B cell (primary cell): ENCODE measurements at regions of chr17 and their contacts with region 1.

Region 1: DNA sequence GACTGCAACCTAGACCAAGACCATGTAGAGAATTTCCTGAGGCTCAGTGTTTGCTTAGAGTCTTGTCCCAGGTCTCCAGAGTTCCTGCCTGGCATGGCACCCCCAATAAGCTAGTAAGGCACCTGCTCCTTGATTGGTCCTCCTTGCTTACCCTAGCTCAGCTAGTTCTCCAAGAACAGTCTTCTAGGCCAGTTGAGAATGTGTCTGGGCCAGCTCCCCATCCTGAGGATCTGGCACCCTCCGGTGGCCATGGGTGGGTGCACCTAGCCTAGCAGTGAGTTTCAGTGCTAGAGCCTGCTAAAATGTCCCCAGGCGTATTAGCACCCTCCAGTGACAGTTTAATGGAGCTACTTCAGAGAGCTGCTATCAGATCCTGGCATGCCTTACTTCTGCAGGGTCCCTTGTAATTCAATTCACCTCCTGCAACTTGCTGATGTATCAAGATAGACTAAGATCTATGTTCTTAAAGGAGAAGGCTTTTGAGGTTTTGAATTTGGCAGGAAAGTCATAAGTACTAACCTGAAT is 44.4 kb upstream of the MED13 start:
- DNase-seq: peak; percentile 76
- ATAC-seq: peak; percentile 97
- H3K4me3 ChIP-seq: no peak overlapping the region
- H3K4me3 Mint-ChIP-seq: no peak overlapping the region
- H3K27ac ChIP-seq: no peak overlapping the region
- H3K27ac Mint-ChIP-seq: no peak overlapping the region
- H3K4me1 ChIP-seq: no peaks in the 10 kb centered on the region
- H3K4me1 Mint-ChIP-seq: no peaks in the 10 kb centered on the region
- H3K27me3 ChIP-seq: peaks cover 0 to 4% (median 0%) of the 10 kb centered on the region in 4 experiments
- H3K27me3 Mint-ChIP-seq: peaks cover 10% of the 10 kb centered on the region
- CTCF ChIP-seq: peak; percentile 74

Region 2: GRCh38 chr17:61635913-61636432 is 473.5 kb before region 1 on chr17:
- CTCF ChIA-PET with region 1: interaction called, 7 read pairs
- POLR2A ChIA-PET with region 1: no interaction called
- intact Hi-C with region 1: loop called (anchors 5 kb)
- DNase-seq: peak; percentile 68
- ATAC-seq: no peak
- H3K4me3 ChIP-seq: no peak overlapping the region
- H3K4me3 Mint-ChIP-seq: no peak overlapping the region
- H3K27ac ChIP-seq: no peak overlapping the region
- H3K27ac Mint-ChIP-seq: no peak overlapping the region
- H3K4me1 ChIP-seq: peaks cover 0 to 3% of the 10 kb centered on the region in 2 donors
- H3K4me1 Mint-ChIP-seq: peaks cover 6% of the 10 kb centered on the region
- H3K27me3 ChIP-seq: peaks cover 0 to 10% (median 0%) of the 10 kb centered on the region in 4 experiments
- H3K27me3 Mint-ChIP-seq: peaks cover 45% of the 10 kb centered on the region
- CTCF ChIP-seq: peak; percentile 86

Region 3: GRCh38 chr17:62052757-62053338 is 56.6 kb before region 1 on chr17:
- CTCF ChIA-PET with region 1: interaction called, 19 read pairs
- POLR2A ChIA-PET with region 1: no interaction called
- intact Hi-C with region 1: loop called (anchors 10 kb)
- DNase-seq: no peak
- ATAC-seq: no peak
- H3K4me3 ChIP-seq: no peak overlapping the region
- H3K4me3 Mint-ChIP-seq: no peak overlapping the region
- H3K27ac ChIP-seq: no peak overlapping the region
- H3K27ac Mint-ChIP-seq: no peak overlapping the region
- H3K4me1 ChIP-seq: no peaks in the 10 kb centered on the region
- H3K4me1 Mint-ChIP-seq: peaks cover 29% of the 10 kb centered on the region
- H3K27me3 ChIP-seq: no peaks in the 10 kb centered on the region
- H3K27me3 Mint-ChIP-seq: no peaks in the 10 kb centered on the region
- CTCF ChIP-seq: no peak

Region 4: DNA sequence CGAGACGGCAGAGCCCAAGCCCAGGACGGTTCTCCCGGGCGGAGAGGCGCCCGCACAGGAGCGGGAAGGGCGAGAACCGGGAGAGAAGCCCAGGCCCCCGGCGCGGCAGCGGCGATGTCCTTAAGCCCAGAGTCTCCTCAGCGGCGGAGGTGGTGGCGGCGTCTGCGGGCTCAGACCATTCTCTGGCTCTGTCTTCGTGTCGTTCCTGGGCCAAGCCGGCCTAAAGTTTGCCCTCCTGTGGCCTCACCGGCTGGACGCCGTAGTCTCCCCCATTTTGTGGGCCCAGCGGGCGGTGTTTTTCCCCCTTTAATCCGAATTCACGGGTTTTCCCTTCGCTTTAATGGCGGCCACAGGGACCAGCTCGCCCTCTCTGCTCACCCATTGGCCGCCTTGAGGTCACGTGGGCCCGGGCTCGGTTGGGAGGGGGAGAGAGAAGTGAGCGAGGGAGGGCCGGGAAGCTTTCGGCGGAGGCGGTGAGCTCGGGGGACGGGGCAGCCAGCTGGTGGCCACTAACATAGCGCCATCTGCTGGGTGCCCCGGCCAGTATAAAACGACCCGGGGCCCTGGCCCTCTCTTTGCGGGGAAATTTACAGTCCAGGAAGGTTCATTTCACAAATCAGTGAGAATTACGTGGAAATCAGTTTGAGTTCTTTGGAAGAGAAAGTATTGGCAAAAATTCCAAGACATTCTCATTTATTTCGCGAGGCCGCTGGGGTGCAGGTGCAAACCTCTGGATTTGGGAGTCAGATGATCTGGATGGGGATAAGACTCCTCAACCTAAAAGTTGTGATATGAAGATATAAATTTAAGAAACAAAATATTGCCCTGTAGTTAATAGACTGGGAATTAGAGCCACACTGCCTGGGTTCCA is 43.6 kb before region 1 on chr17:
- CTCF ChIA-PET with region 1: interaction called, 29 read pairs
- POLR2A ChIA-PET with region 1: interaction called, 3 read pairs
- intact Hi-C with region 1: loop called (anchors 2 kb)
- DNase-seq: peak; percentile 98
- ATAC-seq: peak; percentile 95
- H3K4me3 ChIP-seq: peak overlapping the region; percentile 82 to 100 (median 95)
- H3K4me3 Mint-ChIP-seq: peak overlapping the region; percentile 93
- H3K27ac ChIP-seq: peak overlapping the region; percentile 97 to 99
- H3K27ac Mint-ChIP-seq: peak overlapping the region; percentile 97
- H3K4me1 ChIP-seq: peaks cover 20 to 32% of the 10 kb centered on the region in 2 donors
- H3K4me1 Mint-ChIP-seq: peaks cover 42% of the 10 kb centered on the region
- H3K27me3 ChIP-seq: no peaks in the 10 kb centered on the region
- H3K27me3 Mint-ChIP-seq: no peaks in the 10 kb centered on the region
- CTCF ChIP-seq: peak; percentile 85

Region 5: DNA sequence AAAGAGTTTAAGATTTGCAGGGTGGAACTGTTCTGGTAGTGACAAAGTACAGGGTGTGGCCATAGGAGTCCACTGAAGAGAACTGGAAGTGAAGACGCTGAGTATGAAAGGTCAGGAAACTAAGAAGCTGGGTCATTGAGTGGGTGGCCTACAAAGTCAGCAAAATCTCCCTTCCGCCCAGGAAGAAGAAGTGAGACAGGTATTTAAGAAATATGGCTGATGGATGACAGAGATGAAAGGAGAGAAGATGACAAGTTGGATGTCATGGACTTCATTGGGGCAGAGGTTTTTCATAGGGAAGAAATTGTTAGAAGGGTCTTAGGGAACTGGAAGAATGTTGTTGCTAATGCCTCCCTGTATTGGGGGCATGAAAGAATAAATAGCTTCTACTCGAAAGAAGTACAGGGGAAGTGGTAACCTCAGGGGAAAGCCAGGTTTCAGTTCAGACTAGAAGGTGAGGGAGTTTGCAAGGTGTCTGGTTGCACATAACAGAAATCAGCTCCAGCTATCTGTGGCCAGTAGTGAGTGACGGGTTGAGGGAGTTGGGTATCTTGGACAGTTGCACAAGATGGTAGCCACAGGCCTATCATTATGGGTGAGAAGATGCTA is 10.7 kb before region 1 on chr17:
- CTCF ChIA-PET with region 1: interaction called, 29 read pairs
- POLR2A ChIA-PET with region 1: no interaction called
- intact Hi-C with region 1: no loop called
- DNase-seq: peak; percentile 69
- ATAC-seq: peak; percentile 82
- H3K4me3 ChIP-seq: peak overlapping the region in 2 of 5 experiments; percentile 22 to 44
- H3K4me3 Mint-ChIP-seq: peak overlapping the region; percentile 55
- H3K27ac ChIP-seq: peak overlapping the region; percentile 59 to 76
- H3K27ac Mint-ChIP-seq: peak overlapping the region; percentile 69
- H3K4me1 ChIP-seq: peaks cover 23 to 26% of the 10 kb centered on the region in 2 donors
- H3K4me1 Mint-ChIP-seq: peaks cover 32% of the 10 kb centered on the region
- H3K27me3 ChIP-seq: no peaks in the 10 kb centered on the region
- H3K27me3 Mint-ChIP-seq: no peaks in the 10 kb centered on the region
- CTCF ChIP-seq: no peak

Region 6: GRCh38 chr17:62140836-62141235 is 31.4 kb after region 1 on chr17:
- CTCF ChIA-PET with region 1: no interaction called
- POLR2A ChIA-PET with region 1: no interaction called
- intact Hi-C with region 1: no loop called
- DNase-seq: no peak
- ATAC-seq: no peak
- H3K4me3 ChIP-seq: no peak overlapping the region
- H3K4me3 Mint-ChIP-seq: no peak overlapping the region
- H3K27ac ChIP-seq: no peak overlapping the region
- H3K27ac Mint-ChIP-seq: no peak overlapping the region
- H3K4me1 ChIP-seq: no peaks in the 10 kb centered on the region
- H3K4me1 Mint-ChIP-seq: peaks cover 3% of the 10 kb centered on the region
- H3K27me3 ChIP-seq: peaks cover 0 to 8% (median 2%) of the 10 kb centered on the region in 4 experiments
- H3K27me3 Mint-ChIP-seq: peaks cover 42% of the 10 kb centered on the region
- CTCF ChIP-seq: no peak